ENCODE measurements at regions of chr20 and their contacts with region 1.

Region 1: GRCh38 chr20:31951530-31952453 is at the start of gene PDRG1:
- DNase-seq: peak; percentile 98
- H3K4me3 ChIP-seq: peak within 1 kb of the TSS; percentile 97 to 99 (median 97)
- H3K27ac ChIP-seq: peak within 1 kb of the TSS; percentile 85
- H3K4me1 ChIP-seq: peaks cover 7% of the 10 kb centered on the region
- H3K27me3 ChIP-seq: peaks cover 0 to 3% of the 10 kb centered on the region in 2 experiments
- CTCF ChIP-seq: peak; percentile 97 to 98
- POLR2A ChIP-seq: peak; percentile 84
- total RNA-seq, gene PDRG1: 12.6 and 14.6 TPM in 2 replicates

Region 2: GRCh38 chr20:31822421-31823330 is 129.1 kb before region 1 on chr20:
- CTCF ChIA-PET with region 1: interaction called, 27 read pairs
- POLR2A ChIA-PET with region 1: no interaction called
- dilution Hi-C with region 1: no loop called
- intact Hi-C with region 1: loop called (anchors 1 kb)
- DNase-seq: peak; percentile 62
- H3K4me3 ChIP-seq: no peak overlapping the region
- H3K27ac ChIP-seq: peak overlapping the region; percentile 26
- H3K4me1 ChIP-seq: peaks cover 22% of the 10 kb centered on the region
- H3K27me3 ChIP-seq: no peaks in the 10 kb centered on the region
- CTCF ChIP-seq: peak; percentile 96 to 97
- POLR2A ChIP-seq: no peak

Region 3: DNA sequence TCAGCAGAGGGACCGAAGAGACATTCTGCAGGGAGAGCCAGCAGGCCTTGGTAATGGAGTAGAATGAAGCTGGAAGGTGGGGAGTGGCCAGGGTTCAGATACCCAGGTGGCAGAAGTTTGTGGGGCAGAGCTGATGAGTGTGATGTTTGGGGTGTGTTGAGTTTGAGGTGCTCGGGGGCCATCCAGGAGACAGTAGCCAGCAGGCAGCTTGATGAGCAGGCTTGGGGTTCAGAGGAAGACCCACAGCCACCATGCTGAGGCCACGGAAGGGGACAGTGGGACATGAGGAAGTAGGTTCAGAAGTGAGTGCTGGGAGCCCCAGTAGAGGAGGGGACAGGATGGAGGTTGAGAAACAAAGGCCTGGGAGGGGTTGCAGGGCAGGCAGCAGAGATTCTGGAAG is 95.3 kb before region 1 on chr20:
- CTCF ChIA-PET with region 1: interaction called, 64 read pairs
- POLR2A ChIA-PET with region 1: interaction called, 4 read pairs
- dilution Hi-C with region 1: no loop called
- intact Hi-C with region 1: loop called (anchors 1 kb)
- DNase-seq: no peak
- H3K4me3 ChIP-seq: no peak overlapping the region
- H3K27ac ChIP-seq: no peak overlapping the region
- H3K4me1 ChIP-seq: no peaks in the 10 kb centered on the region
- H3K27me3 ChIP-seq: peaks cover 27 to 40% of the 10 kb centered on the region in 2 experiments
- CTCF ChIP-seq: no peak
- POLR2A ChIP-seq: no peak

Region 4: DNA sequence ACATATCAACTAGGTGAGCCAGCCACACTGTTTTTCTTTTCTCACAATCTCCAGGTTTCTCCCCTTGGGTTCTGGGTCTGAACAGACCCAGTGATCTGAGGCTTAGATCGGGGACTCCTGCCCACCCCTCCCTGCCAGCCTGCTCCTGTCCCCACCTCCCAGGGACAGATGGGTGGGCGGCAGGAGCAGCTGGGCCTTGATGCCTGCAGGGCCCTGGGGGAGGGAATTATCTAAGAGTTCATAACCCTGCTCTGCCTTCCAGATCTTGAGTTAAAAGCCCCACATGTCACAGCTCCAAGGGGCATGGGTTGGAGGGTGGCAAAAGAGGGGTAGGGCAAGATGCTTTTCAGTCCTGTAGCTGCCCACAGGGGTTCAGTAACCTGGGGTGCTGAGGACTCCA is 11.0 kb after region 1 on chr20:
- CTCF ChIA-PET with region 1: interaction called, 24 read pairs
- POLR2A ChIA-PET with region 1: no interaction called
- dilution Hi-C with region 1: no loop called
- intact Hi-C with region 1: no loop called
- DNase-seq: no peak
- H3K4me3 ChIP-seq: no peak overlapping the region
- H3K27ac ChIP-seq: no peak overlapping the region
- H3K4me1 ChIP-seq: no peaks in the 10 kb centered on the region
- H3K27me3 ChIP-seq: peaks cover 24 to 27% of the 10 kb centered on the region in 2 experiments
- CTCF ChIP-seq: no peak
- POLR2A ChIP-seq: no peak

Region 5: DNA sequence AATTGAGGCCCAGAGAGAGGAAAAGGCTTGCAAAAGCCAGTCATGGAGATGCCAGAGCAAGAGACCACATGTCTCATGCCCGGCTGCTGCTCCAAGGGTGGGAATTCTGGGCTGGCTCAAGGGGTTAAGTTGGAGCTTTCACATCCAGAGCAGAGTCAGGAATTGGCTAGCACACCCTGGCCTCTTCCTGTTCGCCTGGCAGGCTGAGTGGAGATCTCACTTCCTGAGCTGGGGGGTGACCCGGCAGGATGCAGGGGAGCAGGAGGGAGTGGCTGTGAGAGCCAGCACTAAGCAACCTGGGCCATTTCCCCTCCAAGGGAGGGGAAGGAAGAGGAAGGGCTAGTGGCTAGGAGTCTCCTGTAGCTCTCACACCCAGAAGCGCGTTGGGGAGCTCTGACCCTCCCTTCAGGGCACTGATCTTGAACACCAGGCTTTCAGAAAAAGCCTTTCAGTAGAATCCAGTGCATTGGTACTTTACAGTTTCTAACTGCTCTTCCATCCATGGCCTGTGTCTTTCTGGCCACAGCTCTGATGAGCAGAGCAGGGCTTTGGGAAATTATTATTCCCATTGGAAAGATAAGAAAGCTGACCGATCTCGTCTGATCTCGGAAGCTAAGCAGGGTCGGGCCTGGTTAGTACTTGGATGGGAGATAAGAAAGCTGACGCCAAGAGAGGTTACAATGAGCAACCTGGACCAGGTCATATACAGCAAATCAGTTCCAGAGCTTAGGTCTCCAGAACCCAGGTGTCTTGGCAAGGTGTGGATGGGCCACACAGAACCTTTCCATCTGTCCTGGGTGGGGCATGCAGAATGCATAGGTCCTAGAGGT is 56.2 kb after region 1 on chr20:
- CTCF ChIA-PET with region 1: interaction called, 9 read pairs
- POLR2A ChIA-PET with region 1: no interaction called
- dilution Hi-C with region 1: no loop called
- intact Hi-C with region 1: loop called (anchors 5 kb)
- DNase-seq: peak; percentile 80
- H3K4me3 ChIP-seq: peak overlapping the region in 1 of 3 experiments; percentile 4
- H3K27ac ChIP-seq: peak overlapping the region; percentile 62
- H3K4me1 ChIP-seq: peaks cover 39% of the 10 kb centered on the region
- H3K27me3 ChIP-seq: no peaks in the 10 kb centered on the region
- CTCF ChIP-seq: no peak
- POLR2A ChIP-seq: peak; percentile 88

Region 6: DNA sequence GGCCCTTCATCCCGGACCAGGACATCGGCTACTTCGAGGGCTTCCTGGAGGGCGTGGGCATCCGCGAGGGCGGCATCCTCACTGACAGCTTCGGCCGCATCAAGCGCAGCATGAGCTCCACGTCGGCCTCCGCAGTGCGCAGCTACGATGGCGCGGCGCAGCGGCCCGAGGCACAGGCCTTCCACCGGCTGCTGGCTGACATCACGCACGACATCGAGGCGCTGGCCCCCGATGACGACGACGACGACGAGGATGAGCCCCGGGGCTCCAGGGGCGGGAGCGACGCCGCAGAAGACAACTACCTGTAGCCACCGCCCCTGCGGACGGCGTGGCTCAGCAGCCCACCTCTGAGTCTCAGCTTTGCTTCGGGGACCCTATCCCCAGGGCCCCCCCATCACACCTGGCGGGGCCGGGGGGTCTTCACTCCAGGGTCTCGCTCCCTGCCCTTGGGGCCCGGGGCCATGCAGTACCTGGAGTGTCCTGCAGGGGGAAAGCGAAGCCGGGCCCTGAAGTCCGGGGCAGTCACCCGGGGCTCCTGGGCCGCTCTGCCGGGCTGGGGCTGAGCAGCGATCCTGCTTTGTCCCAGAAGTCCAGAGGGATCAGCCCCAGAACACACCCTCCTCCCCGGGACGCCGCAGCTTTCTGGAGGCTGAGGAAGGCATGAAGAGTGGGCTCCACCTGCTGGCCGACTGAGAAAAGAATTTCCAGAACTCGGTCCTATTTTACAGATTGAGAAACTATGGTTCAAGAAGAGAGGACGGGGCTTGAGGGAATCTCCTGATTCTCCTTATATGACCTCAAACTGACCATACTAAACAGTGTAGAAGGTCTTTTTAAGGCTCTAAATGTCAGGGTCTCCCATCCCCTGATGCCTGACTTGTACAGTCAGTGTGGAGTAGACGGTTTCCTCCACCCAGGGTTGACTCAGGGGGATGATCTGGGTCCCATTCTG is 79.5 kb after region 1 on chr20:
- CTCF ChIA-PET with region 1: interaction called, 32 read pairs
- POLR2A ChIA-PET with region 1: no interaction called
- dilution Hi-C with region 1: no loop called
- intact Hi-C with region 1: loop called (anchors 1 kb)
- DNase-seq: peak; percentile 67
- H3K4me3 ChIP-seq: no peak overlapping the region
- H3K27ac ChIP-seq: no peak overlapping the region
- H3K4me1 ChIP-seq: no peaks in the 10 kb centered on the region
- H3K27me3 ChIP-seq: peaks cover 3 to 12% of the 10 kb centered on the region in 2 experiments
- CTCF ChIP-seq: peak; percentile 88 to 89
- POLR2A ChIP-seq: no peak